Heart left ventricle (tissue), 16 donors: ENCODE measurements at regions of chr6 and their contacts with region 1.

Region 1: GRCh38 chr6:47413752-47414422 is 63.7 kb upstream of the CD2AP start:
- DNase-seq: peak in 2 of 5 donors; percentile 28 to 29
- ATAC-seq: peak in 3 of 4 donors; percentile 78 to 88 (median 87)
- H3K4me3 ChIP-seq: peak overlapping the region in 11 of 12 donors; percentile 9 to 57 (median 45)
- H3K27ac ChIP-seq: peak overlapping the region in 8 of 12 donors; percentile 6 to 81 (median 48)
- H3K4me1 ChIP-seq: peaks cover 0 to 23% (median 0%) of the 10 kb centered on the region in 12 donors
- H3K27me3 ChIP-seq: no peaks in the 10 kb centered on the region
- CTCF ChIP-seq: peak; percentile 83 to 94 (median 90)
- POLR2A ChIP-seq: no peak

Region 2: GRCh38 chr6:47595797-47596196 is 181.9 kb after region 1 on chr6:
- intact Hi-C with region 1: loop called in 6 of 10 experiments (anchors 5 to 10 kb)
- DNase-seq: no peak
- ATAC-seq: no peak
- H3K4me3 ChIP-seq: no peak overlapping the region
- H3K27ac ChIP-seq: no peak overlapping the region
- H3K4me1 ChIP-seq: peaks cover 0 to 5% (median 0%) of the 10 kb centered on the region in 12 donors
- H3K27me3 ChIP-seq: no peaks in the 10 kb centered on the region
- CTCF ChIP-seq: no peak
- POLR2A ChIP-seq: no peak

Region 3: GRCh38 chr6:47621838-47622449 is 208.1 kb after region 1 on chr6:
- intact Hi-C with region 1: loop called in 1 of 10 experiments (anchors 10 kb)
- DNase-seq: no peak
- ATAC-seq: no peak
- H3K4me3 ChIP-seq: no peak overlapping the region
- H3K27ac ChIP-seq: no peak overlapping the region
- H3K4me1 ChIP-seq: no peaks in the 10 kb centered on the region
- H3K27me3 ChIP-seq: no peaks in the 10 kb centered on the region
- CTCF ChIP-seq: no peak
- POLR2A ChIP-seq: no peak

Region 4: GRCh38 chr6:47733879-47734558 is 320.1 kb after region 1 on chr6:
- intact Hi-C with region 1: loop called in 6 of 10 experiments (anchors 2 to 5 kb)
- DNase-seq: no peak
- ATAC-seq: peak in 1 of 4 donors; percentile 39
- H3K4me3 ChIP-seq: no peak overlapping the region
- H3K27ac ChIP-seq: no peak overlapping the region
- H3K4me1 ChIP-seq: peaks cover 0 to 15% (median 2%) of the 10 kb centered on the region in 12 donors
- H3K27me3 ChIP-seq: no peaks in the 10 kb centered on the region
- CTCF ChIP-seq: peak; percentile 28 to 61 (median 44)
- POLR2A ChIP-seq: no peak

Region 5: DNA sequence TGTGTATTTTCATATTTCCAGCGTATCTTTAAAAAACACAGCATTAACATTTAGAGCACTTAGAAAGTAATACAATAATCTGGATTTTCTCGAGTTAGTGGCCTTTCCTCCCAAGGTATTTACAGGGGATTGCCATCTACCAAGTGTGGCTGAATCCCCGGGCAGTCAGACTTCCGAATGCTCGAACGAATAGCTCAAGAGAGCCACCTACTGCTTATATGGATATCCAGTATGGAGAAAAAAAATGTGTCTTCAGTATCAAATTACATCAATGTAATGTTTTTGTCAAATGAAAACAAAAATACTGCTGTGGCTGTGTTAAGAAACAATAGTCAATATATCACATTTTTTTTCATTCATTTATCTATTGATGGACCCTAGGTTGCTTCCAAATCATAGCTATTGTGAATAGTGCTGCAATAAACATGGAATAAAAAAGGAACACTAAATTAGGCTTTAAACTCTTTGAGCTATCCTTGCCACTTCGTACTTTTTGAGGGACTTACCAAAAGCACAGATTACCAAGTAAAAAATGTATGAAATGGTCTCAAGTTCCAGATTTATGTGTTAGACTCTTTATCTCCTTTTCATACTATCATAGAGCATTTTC is 1351.6 kb after region 1 on chr6:
- intact Hi-C with region 1: loop called in 1 of 10 experiments (anchors 10 kb)
- DNase-seq: peak in 3 of 5 donors; percentile 6 to 35 (median 26)
- ATAC-seq: peak in 1 of 4 donors; percentile 59
- H3K4me3 ChIP-seq: no peak overlapping the region
- H3K27ac ChIP-seq: no peak overlapping the region
- H3K4me1 ChIP-seq: peaks cover 0 to 2% (median 0%) of the 10 kb centered on the region in 12 donors
- H3K27me3 ChIP-seq: peaks cover 0 to 6% (median 0%) of the 10 kb centered on the region in 9 donors
- CTCF ChIP-seq: peak in 10 of 12 donors; percentile 12 to 58 (median 50)
- POLR2A ChIP-seq: no peak